Breast epithelium (tissue), 4 donors: ENCODE measurements at regions of chr20 and their contacts with region 1.

Region 1: DNA sequence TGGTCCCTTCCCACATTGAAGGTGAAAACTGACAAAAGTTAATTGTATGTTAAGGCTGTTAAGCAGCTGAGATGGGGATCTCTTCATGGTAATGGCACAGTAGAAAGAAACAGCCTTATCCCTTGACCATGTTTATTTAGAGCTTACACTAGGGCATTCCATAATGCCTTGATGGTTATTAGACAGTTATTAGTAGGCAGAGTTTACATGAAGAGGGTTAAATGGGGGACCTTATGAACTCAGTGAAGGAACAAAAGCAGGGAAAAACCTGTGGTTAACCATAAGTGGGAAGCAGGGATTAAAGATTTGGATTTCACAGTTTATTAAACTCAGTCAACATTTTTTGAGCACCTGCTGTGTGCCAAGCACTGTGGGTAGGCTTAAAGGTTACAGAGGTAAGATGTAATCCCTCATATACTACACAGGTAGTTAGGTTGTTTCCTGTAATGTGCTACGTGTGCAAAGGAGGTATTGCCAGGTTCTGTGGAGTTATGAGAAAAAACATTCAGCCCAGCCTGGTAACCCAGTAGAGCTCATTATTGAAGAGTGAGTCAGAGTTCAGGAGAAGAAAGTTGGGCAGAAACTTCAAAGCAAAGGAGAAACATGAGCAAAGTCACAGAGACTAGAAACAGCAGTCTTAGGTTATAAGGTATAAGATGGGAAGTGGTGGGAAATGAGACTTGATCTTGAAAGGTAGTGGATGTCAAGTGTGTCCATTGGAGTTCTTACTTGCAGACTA is 32.3 kb upstream of the GNRH2 start:
- DNase-seq: no peak
- H3K4me3 ChIP-seq: no peak overlapping the region
- H3K27ac ChIP-seq: no peak overlapping the region
- H3K4me1 ChIP-seq: no peaks in the 10 kb centered on the region
- H3K27me3 ChIP-seq: no peaks in the 10 kb centered on the region
- CTCF ChIP-seq: no peak
- POLR2A ChIP-seq: no peak

Region 2: GRCh38 chr20:1325173-1326030 is 1685.8 kb before region 1 on chr20:
- intact Hi-C with region 1: no loop called
- DNase-seq: peak; percentile 93
- H3K4me3 ChIP-seq: peak overlapping the region; percentile 76 to 88 (median 85)
- H3K27ac ChIP-seq: peak overlapping the region; percentile 98 to 99
- H3K4me1 ChIP-seq: peaks cover 0 to 27% of the 10 kb centered on the region in 2 donors
- H3K27me3 ChIP-seq: no peaks in the 10 kb centered on the region
- CTCF ChIP-seq: peak in 2 of 3 donors; percentile 59 to 63
- POLR2A ChIP-seq: peak; percentile 90

Region 3: DNA sequence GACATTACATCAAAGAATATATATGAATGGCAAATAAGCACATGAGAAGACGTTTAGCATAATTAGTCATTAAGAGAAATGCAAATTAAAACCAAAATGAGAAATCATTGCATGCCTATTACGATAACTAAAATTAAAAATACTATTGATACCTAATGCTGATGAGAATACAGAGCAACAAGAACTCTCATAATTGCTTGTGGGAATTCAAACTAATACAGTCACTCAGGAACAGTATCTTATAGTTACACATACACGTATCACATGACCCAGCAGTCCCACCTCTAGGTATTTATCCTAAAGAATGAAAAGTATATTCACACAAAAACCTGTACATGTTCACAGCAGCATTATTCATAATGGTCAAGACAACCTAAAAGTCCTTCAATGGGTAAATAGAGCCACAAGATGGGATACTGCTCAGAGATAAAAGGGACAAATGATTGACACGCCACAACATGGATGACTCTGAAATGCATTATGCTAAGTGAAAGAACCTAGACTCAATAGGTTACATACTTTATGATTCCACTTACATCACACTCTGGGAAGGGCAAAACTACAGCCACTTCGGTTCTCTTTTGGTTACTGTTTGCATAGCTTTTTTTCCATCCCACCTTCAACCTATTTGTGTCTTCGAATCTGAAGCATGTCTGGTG is 227.1 kb before region 1 on chr20:
- intact Hi-C with region 1: no loop called
- DNase-seq: no peak
- H3K4me3 ChIP-seq: no peak overlapping the region
- H3K27ac ChIP-seq: no peak overlapping the region
- H3K4me1 ChIP-seq: no peaks in the 10 kb centered on the region
- H3K27me3 ChIP-seq: no peaks in the 10 kb centered on the region
- CTCF ChIP-seq: no peak
- POLR2A ChIP-seq: no peak

Region 4: DNA sequence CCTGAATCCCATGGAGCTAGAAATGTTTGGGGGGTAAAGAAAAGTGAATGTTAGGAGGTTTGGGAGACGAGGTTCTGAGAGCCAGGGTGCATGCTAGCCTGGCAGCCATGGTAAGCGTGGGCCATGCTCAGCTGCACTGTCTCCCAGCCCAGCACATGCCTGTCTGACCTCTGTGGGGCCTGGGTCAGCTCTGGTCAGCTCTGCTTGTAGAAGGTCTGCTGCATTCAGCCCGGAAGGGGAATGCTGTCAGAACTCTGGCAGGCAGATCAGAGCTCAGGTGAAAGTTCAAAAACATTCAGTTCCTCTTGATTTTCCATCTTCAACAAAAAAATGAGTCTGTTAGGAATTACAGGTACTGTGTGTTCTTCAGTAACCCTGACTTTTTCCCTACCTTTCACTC is 26.5 kb after region 1 on chr20:
- intact Hi-C with region 1: loop called (anchors 2 kb)
- DNase-seq: no peak
- H3K4me3 ChIP-seq: no peak overlapping the region
- H3K27ac ChIP-seq: no peak overlapping the region
- H3K4me1 ChIP-seq: no peaks in the 10 kb centered on the region
- H3K27me3 ChIP-seq: no peaks in the 10 kb centered on the region
- CTCF ChIP-seq: no peak
- POLR2A ChIP-seq: no peak